Heart right ventricle (tissue), 16 donors: ENCODE measurements at regions of chr6 and their contacts with region 1.

Region 1: DNA sequence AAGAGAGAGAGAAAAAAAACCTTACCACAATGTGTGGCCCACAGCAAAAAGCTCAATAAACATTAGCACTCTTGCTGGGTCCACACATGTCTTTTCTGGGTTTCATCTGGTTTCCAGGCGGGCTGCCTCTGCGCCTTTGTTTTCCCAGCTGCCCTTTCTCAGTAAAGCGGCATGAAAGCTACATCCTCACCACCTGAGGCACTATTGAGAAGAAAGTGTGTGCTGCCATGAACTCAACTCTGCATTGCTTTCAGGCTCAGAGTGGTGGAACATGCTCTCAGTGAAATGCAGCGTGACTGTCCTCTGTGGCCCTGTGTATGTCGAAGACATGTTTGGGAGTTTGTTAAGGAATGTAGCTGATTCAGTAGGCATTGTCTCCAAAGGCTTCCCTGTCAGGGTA is 102.3 kb downstream of the LYRM2 start:
- DNase-seq: no peak
- ATAC-seq: no peak
- H3K4me3 ChIP-seq: no peak overlapping the region
- H3K27ac ChIP-seq: no peak overlapping the region
- H3K4me1 ChIP-seq: peaks cover 0 to 4% (median 0%) of the 10 kb centered on the region in 9 donors
- H3K27me3 ChIP-seq: no peaks in the 10 kb centered on the region
- CTCF ChIP-seq: no peak

Region 2: GRCh38 chr6:89597988-89598692 is 61.9 kb after region 1 on chr6:
- intact Hi-C with region 1: loop called in 1 of 10 experiments (anchors 10 kb)
- DNase-seq: no peak
- ATAC-seq: peak in 2 of 8 donors; percentile 22 to 48
- H3K4me3 ChIP-seq: no peak overlapping the region
- H3K27ac ChIP-seq: no peak overlapping the region
- H3K4me1 ChIP-seq: peaks cover 0 to 23% (median 3%) of the 10 kb centered on the region in 9 donors
- H3K27me3 ChIP-seq: no peaks in the 10 kb centered on the region
- CTCF ChIP-seq: peak in 5 of 9 donors; percentile 11 to 47 (median 37)